Posterior cingulate gyrus (tissue), 11 donors: ENCODE measurements at regions of chr5 and their contacts with region 1.

Region 1: GRCh38 chr5:115246361-115246991 is 16.2 kb downstream of the PGGT1B start:
- DNase-seq: no peak

Region 2: GRCh38 chr5:113612060-113612496 is 1634.4 kb before region 1 on chr5:
- intact Hi-C with region 1: loop called (anchors 5 kb)
- DNase-seq: no peak

Region 3: GRCh38 chr5:115098041-115098702 is 148.3 kb before region 1 on chr5:
- intact Hi-C with region 1: loop called (anchors 1 kb)
- DNase-seq: peak in 2 of 10 donors; percentile 9 to 21

Region 4: DNA sequence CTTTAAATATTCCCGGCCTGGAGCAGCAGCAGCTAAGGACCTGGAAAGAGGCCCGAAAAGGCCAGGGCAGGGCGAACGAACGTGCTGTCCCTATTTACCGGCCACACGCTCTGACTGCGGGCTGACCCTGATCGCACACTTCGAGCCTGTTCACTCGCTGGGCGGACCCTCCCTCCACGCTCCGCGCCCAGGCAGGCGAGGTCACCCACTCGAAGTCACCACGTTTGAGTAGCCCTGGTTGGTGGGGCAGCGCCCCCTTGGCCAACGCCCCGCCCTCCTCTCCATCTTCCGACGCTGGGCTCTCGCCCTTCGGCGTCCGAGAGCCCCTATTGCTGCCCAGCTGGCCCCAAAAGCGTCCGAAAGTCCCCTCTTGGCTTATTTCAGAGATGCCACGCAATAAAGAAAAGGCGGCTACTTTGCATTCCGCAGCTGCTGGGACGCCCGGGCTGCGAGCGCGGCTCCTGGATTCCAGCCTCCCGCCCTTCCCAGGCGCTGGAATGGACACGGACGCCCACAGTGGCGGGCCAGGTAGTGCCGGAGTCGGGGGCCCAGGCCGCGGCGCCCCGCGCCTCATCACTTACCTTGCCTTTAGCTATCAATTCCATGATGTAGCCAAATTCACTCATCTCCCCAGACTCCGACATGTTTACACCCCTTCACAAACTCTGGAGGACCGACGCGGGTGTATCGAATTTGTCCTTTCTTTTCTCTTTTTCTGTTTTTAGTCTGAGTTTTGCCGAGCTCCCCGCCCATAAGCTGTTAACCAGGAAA is 66.9 kb before region 1 on chr5:
- intact Hi-C with region 1: loop called (anchors 5 kb)
- DNase-seq: peak in 3 of 10 donors; percentile 14 to 83 (median 75)

Region 5: GRCh38 chr5:115333164-115333563 is 86.7 kb after region 1 on chr5:
- intact Hi-C with region 1: no loop called
- DNase-seq: no peak

Region 6: DNA sequence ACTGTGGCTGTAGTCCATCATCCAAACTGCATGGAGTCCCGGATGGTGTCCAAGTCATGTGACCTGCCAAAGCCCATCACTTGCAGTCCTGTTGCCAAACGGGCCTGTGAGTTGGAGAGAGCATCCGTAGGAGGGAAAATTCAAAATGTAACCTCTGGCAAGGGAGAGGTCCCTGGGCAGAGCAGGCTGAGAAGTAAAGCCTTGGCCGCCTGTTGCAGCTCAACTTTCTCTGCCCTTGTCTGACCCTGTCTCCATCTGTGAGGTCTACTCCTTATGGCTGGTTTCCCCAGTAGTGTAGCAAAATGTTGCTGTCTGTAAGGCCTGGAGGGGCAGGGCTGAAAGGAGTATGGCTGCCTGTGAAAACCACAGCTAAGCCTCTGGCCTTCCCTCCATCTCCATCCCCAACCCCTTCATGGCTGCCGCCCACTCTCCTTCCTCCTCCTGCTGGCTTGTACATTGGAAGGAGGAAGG is 1164.7 kb after region 1 on chr5:
- intact Hi-C with region 1: no loop called
- DNase-seq: peak in 6 of 10 donors; percentile 21 to 87 (median 46)